PC-3 (cell line): ENCODE measurements at regions of chr5 and their contacts with region 1.

Region 1: GRCh38 chr5:55994574-55995333 is at the start of gene IL6ST:
- DNase-seq: peak; percentile 90
- ATAC-seq: peak; percentile 83
- H3K4me3 ChIP-seq: peak within 1 kb of the TSS; percentile 98
- H3K27ac ChIP-seq: peak within 1 kb of the TSS; percentile 88
- H3K4me1 ChIP-seq: peaks cover 36% of the 10 kb centered on the region
- H3K27me3 ChIP-seq: no peaks in the 10 kb centered on the region
- CTCF ChIP-seq: no peak
- total RNA-seq, gene IL6ST: 25.7 and 28.0 TPM in 2 replicates

Region 2: GRCh38 chr5:56056875-56057274 is 62.1 kb after region 1 on chr5:
- CTCF ChIA-PET with region 1: no interaction called
- POLR2A ChIA-PET with region 1: interaction called, 4 read pairs
- intact Hi-C with region 1: loop called (anchors 2 kb)
- DNase-seq: no peak
- ATAC-seq: no peak
- H3K4me3 ChIP-seq: no peak overlapping the region
- H3K27ac ChIP-seq: no peak overlapping the region
- H3K4me1 ChIP-seq: peaks cover 15% of the 10 kb centered on the region
- H3K27me3 ChIP-seq: no peaks in the 10 kb centered on the region
- CTCF ChIP-seq: no peak

Region 3: GRCh38 chr5:56123531-56124243 is 128.9 kb after region 1 on chr5:
- CTCF ChIA-PET with region 1: no interaction called
- POLR2A ChIA-PET with region 1: no interaction called
- intact Hi-C with region 1: loop called (anchors 10 kb)
- DNase-seq: peak; percentile 87
- ATAC-seq: peak; percentile 93
- H3K4me3 ChIP-seq: no peak overlapping the region
- H3K27ac ChIP-seq: peak overlapping the region; percentile 74
- H3K4me1 ChIP-seq: peaks cover 21% of the 10 kb centered on the region
- H3K27me3 ChIP-seq: no peaks in the 10 kb centered on the region
- CTCF ChIP-seq: no peak

Region 4: DNA sequence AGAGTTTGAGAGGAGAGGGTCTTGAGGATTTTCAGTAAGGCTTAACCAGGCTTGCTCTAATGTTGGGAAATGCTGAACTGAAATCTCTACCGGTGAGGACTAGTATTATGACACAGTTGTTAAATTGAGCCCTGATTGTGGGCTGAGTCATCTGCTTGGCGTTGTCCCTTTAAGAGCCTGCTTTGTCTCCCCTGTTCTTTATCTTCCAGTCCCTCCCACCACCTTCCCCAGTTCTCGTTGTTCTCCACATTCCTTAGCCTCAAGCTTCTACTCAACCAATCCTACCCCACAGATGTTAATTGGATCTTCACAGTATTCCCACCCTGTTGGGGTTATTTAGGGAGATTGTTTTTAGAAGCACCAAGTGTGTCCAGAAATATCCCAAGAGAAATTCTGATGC is 180.7 kb after region 1 on chr5:
- CTCF ChIA-PET with region 1: no interaction called
- POLR2A ChIA-PET with region 1: interaction called, 3 read pairs
- intact Hi-C with region 1: loop called (anchors 1 kb)
- DNase-seq: peak; percentile 48
- ATAC-seq: peak; percentile 82
- H3K4me3 ChIP-seq: no peak overlapping the region
- H3K27ac ChIP-seq: no peak overlapping the region
- H3K4me1 ChIP-seq: 0 out of 2 replicates have a peak, but pooled peaks cover 4% of the 10 kb centered on the region
- H3K27me3 ChIP-seq: no peaks in the 10 kb centered on the region
- CTCF ChIP-seq: no peak